Calu3 (cell line): ENCODE measurements at regions of chr2 and their contacts with region 1.

Region 1: GRCh38 chr2:45935791-45936622 is 284.5 kb downstream of the PRKCE start:
- DNase-seq: peak; percentile 86
- H3K4me3 Mint-ChIP-seq: no peak overlapping the region
- H3K27ac Mint-ChIP-seq: no peak overlapping the region
- H3K4me1 Mint-ChIP-seq: peaks cover 30% of the 10 kb centered on the region
- H3K27me3 Mint-ChIP-seq: no peaks in the 10 kb centered on the region
- CTCF ChIP-seq: peak; percentile 71

Region 2: GRCh38 chr2:45585267-45585861 is 350.6 kb before region 1 on chr2:
- CTCF ChIA-PET with region 1: no interaction called
- intact Hi-C with region 1: loop called (anchors 1 kb)
- DNase-seq: peak; percentile 45
- H3K4me3 Mint-ChIP-seq: no peak overlapping the region
- H3K27ac Mint-ChIP-seq: no peak overlapping the region
- H3K4me1 Mint-ChIP-seq: no peaks in the 10 kb centered on the region
- H3K27me3 Mint-ChIP-seq: no peaks in the 10 kb centered on the region
- CTCF ChIP-seq: peak; percentile 53

Region 3: GRCh38 chr2:45643543-45644542 is 292.2 kb before region 1 on chr2:
- CTCF ChIA-PET with region 1: interaction called, 3 read pairs
- intact Hi-C with region 1: loop called (anchors 1 kb)
- DNase-seq: peak; percentile 83
- H3K4me3 Mint-ChIP-seq: peak overlapping the region; percentile 76
- H3K27ac Mint-ChIP-seq: peak overlapping the region; percentile 49
- H3K4me1 Mint-ChIP-seq: peaks cover 24% of the 10 kb centered on the region
- H3K27me3 Mint-ChIP-seq: peaks cover 47% of the 10 kb centered on the region
- CTCF ChIP-seq: peak; percentile 98

Region 4: GRCh38 chr2:45778720-45779171 is 157.3 kb before region 1 on chr2:
- CTCF ChIA-PET with region 1: interaction called, 14 read pairs
- intact Hi-C with region 1: loop called (anchors 1 kb)
- DNase-seq: peak; percentile 84
- H3K4me3 Mint-ChIP-seq: peak overlapping the region; percentile 41
- H3K27ac Mint-ChIP-seq: no peak overlapping the region
- H3K4me1 Mint-ChIP-seq: peaks cover 14% of the 10 kb centered on the region
- H3K27me3 Mint-ChIP-seq: no peaks in the 10 kb centered on the region
- CTCF ChIP-seq: peak; percentile 61